CD14-positive monocyte (primary cell): ENCODE measurements at regions of chr19 and their contacts with region 1.

Region 1: DNA sequence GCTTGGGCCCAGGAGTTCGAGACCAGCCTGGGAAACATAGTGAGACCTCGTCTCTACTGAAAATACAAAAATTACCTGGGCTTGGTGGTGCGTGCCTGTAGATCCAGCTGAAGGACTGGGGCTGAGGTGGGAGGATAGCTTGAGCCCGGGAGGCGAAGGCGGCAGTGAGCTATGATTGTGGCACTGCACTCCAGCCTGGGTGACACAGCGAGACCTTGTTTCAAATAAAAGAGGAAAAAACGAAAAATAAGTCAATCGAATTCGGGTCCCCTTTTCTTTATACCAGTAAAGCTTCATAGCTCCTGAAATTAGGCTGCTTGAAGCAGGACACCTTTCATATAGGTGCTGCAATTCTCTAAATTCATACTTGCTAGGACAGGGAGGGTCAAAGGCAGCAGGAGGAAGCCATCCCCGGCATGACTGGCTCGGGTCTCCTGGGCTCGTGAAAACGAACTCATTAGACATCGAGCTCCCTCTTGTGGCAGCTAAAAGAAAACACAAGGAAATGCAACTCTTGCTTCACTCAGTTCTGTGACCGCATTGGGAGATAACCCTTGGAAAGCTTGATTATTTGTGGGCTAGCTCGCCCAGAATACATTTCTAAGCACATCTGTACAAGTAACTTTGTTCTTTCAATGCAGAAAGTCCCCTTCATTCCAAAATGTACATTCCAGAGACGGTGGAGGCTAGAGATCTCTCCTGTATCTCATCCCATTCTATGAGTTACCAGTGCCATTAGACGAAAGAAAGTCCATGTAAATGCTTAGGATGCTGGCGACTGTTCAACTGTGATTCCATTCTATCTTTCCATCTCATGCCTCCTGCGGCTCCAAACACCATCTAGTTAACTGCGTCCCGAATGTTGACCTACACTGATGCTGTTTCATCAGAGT is 16.8 kb downstream of the FPR2 start:
- DNase-seq: peak; percentile 81 to 93 (median 91)
- H3K4me3 ChIP-seq: no peak overlapping the region
- H3K4me3 Mint-ChIP-seq: peak overlapping the region in 1 of 2 donors; percentile 39
- H3K27ac ChIP-seq: no peak overlapping the region
- H3K27ac Mint-ChIP-seq: peak overlapping the region; percentile 10 to 86 (median 70)
- H3K4me1 ChIP-seq: peaks cover 55 to 70% of the 10 kb centered on the region in 2 donors
- H3K4me1 Mint-ChIP-seq: peaks cover 66% of the 10 kb centered on the region
- H3K27me3 ChIP-seq: no peaks in the 10 kb centered on the region
- H3K27me3 Mint-ChIP-seq: peaks cover 3% of the 10 kb centered on the region in 3 donors
- CTCF ChIP-seq: peak; percentile 84

Region 2: DNA sequence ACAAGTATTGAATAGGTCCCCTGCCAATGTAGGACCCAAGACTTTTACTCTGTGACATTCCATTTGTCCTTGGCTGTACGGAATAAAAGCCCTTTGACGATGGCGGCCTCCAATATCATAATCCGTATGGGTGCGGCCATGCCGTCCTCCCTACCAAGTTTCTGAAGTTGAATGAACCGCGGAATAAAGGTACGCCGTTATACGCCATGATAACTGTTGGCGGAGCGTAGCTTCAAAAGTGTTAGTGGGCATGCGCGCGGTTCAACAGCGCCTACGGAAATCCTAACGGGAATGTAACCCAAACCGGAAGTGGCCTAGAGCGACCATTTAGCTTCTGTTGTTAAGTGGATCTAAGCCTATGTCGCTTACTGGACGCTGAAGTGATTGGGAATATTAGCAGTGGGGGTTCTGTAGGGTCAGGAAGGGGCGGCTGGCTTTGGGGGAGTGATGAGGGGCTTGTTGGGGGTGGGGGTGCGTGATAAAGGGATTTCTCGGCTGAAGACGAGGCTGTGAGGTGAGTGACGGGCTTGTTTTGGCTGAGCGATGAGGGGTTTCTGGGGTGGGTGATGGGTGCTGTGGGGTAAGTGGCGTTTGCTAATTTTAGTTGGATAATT is 206.7 kb before region 1 on chr19 and contains the start of gene ZNF175:
- intact Hi-C with region 1: no loop called
- DNase-seq: peak; percentile 79 to 90 (median 88)
- H3K4me3 ChIP-seq: peak within 1 kb of the TSS; percentile 76 to 91 (median 84)
- H3K4me3 Mint-ChIP-seq: peak within 1 kb of the TSS; percentile 92 to 95
- H3K27ac ChIP-seq: peak within 1 kb of the TSS in 1 of 2 donors; percentile 32
- H3K27ac Mint-ChIP-seq: peak within 1 kb of the TSS in 6 of 7 donors; percentile 35 to 86 (median 44)
- H3K4me1 ChIP-seq: peaks cover 16 to 24% of the 10 kb centered on the region in 2 donors
- H3K4me1 Mint-ChIP-seq: peaks cover 25% of the 10 kb centered on the region
- H3K27me3 ChIP-seq: no peaks in the 10 kb centered on the region
- H3K27me3 Mint-ChIP-seq: peaks cover 0 to 5% (median 2%) of the 10 kb centered on the region in 3 donors
- CTCF ChIP-seq: no peak
- polyA plus RNA-seq, gene ZNF175: 0.39 to 2.4 (median 0.82) TPM

Region 3: GRCh38 chr19:51688672-51689571 is 88.9 kb before region 1 on chr19:
- intact Hi-C with region 1: loop called in 1 of 2 experiments (anchors 10 kb)
- DNase-seq: peak in 1 of 3 donors; percentile 31
- H3K4me3 ChIP-seq: peak overlapping the region in 1 of 3 experiments; percentile 57
- H3K4me3 Mint-ChIP-seq: peak overlapping the region; percentile 62 to 94
- H3K27ac ChIP-seq: no peak overlapping the region
- H3K27ac Mint-ChIP-seq: peak overlapping the region in 1 of 7 donors; percentile 60
- H3K4me1 ChIP-seq: peaks cover 23 to 37% of the 10 kb centered on the region in 2 donors
- H3K4me1 Mint-ChIP-seq: peaks cover 31% of the 10 kb centered on the region
- H3K27me3 ChIP-seq: peaks cover 32 to 87% of the 10 kb centered on the region in 2 donors
- H3K27me3 Mint-ChIP-seq: peaks cover 63 to 85% (median 69%) of the 10 kb centered on the region in 3 donors
- CTCF ChIP-seq: no peak

Region 4: DNA sequence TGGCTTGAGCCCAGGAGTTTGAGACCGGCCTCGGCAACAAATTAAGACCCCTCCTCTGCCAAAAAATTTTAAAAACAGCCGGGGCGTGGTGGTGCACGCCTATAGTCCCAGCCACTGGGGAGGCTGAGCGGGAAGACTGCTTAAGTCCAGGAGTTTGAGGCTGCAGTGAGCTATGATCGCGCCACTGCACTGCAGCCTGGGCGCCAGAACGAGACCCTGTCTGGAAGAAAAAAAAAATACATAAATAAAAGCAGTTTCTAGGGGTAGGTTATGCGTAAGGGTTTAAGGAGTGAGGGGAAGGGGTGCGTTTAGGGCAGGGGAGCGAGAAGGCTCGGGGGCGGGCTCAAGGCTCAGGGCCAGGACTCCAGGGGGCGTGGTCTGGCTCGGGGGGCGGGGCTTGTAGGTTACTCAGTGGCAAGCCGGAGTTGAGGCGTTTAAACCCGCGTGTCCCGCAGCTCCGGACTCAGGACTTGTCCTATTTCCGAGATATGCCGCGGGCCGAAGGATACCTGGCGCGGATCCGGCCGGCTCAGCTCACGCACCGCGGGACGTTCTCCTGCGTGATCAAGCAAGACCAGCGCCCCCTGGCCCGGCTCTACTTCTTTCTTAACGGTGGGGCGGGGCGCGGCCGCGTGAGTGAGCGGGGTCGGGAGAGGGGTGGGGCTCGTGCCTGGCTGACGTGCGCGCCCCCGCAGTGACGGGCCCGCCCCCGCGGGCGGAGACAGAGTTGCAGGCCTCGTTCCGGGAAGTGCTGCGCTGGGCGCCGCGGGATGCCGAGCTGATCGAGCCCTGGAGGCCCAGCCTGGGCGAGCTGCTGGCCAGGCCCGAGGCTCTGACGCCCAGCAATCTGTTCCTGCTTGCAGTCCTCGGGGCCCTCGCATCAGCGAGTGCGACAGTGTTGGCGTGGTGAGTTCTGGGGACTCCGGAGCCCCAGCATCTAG is 74.0 kb before region 1 on chr19:
- intact Hi-C with region 1: loop called in 1 of 2 experiments (anchors 5 kb)
- DNase-seq: peak; percentile 88 to 94 (median 93)
- H3K4me3 ChIP-seq: peak overlapping the region; percentile 70 to 91 (median 75)
- H3K4me3 Mint-ChIP-seq: peak overlapping the region; percentile 89 to 94
- H3K27ac ChIP-seq: peak overlapping the region; percentile 89 to 95
- H3K27ac Mint-ChIP-seq: peak overlapping the region; percentile 93 to 99 (median 96)
- H3K4me1 ChIP-seq: peaks cover 31 to 39% of the 10 kb centered on the region in 2 donors
- H3K4me1 Mint-ChIP-seq: peaks cover 37% of the 10 kb centered on the region
- H3K27me3 ChIP-seq: peaks cover 9 to 26% of the 10 kb centered on the region in 2 donors
- H3K27me3 Mint-ChIP-seq: peaks cover 38 to 47% (median 40%) of the 10 kb centered on the region in 3 donors
- CTCF ChIP-seq: peak; percentile 33